CD4-positive, alpha-beta memory T cell (primary cell): ENCODE measurements at regions of chr12 and their contacts with region 1.

Region 1: GRCh38 chr12:101280006-101280505 is at the start of gene UTP20:
- DNase-seq: peak; percentile 91 to 93 (median 92)
- H3K4me3 ChIP-seq: peak within 1 kb of the TSS; percentile 71 to 93
- H3K4me3 Mint-ChIP-seq: peak within 1 kb of the TSS; percentile 95 to 98 (median 95)
- H3K27ac ChIP-seq: peak within 1 kb of the TSS; percentile 56
- H3K27ac Mint-ChIP-seq: peak within 1 kb of the TSS; percentile 78 to 93 (median 88)
- H3K4me1 ChIP-seq: peaks cover 7% of the 10 kb centered on the region
- H3K4me1 Mint-ChIP-seq: peaks cover 7 to 27% (median 14%) of the 10 kb centered on the region in 4 donors
- H3K27me3 ChIP-seq: peaks cover 6% of the 10 kb centered on the region
- H3K27me3 Mint-ChIP-seq: peaks cover 3 to 9% of the 10 kb centered on the region in 2 donors
- total RNA-seq, gene UTP20: 14.6 to 14.9 TPM

Region 2: DNA sequence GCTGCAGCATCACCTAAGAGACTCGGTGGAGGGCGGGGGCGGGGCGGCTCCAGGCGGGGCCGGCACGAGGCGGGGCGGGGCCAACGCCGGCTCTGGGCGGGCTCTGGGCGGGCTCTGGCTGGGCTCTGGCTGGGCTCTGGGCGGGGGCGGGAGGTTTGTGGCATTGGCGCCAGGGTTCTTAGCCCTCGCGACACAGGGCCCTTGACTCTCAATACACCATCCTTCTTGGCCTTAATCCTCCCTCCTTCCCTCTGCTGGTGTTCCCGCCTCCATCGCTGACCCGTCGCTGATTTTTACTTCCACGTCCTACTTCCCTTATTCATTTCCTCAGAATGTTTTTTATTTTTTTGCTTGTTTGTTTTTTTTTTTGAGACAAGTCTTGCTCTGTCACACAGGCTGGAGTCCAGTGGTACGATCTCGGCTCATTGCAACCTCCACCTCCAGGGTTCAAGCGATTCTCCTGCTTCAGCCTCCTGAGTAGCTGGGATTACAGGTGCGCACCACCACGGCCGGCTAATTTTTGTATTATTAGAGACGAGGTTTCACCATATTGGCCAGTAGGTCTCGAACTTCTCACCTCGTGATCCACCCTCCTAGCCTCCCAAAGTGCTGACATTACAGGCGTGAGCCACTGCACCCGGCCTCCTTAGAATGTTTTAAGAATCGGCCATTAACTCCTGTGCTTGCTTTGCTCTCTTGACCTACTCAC is 1137.1 kb before region 1 on chr12 and contains the start of gene BLTP3B:
- CTCF ChIA-PET with region 1: no interaction called
- POLR2A ChIA-PET with region 1: no interaction called
- intact Hi-C with region 1: loop called (anchors 5 kb)
- DNase-seq: peak; percentile 81 to 88 (median 85)
- H3K4me3 ChIP-seq: peak within 1 kb of the TSS; percentile 66 to 85
- H3K4me3 Mint-ChIP-seq: peak within 1 kb of the TSS; percentile 89 to 98 (median 96)
- H3K27ac ChIP-seq: peak within 1 kb of the TSS; percentile 85
- H3K27ac Mint-ChIP-seq: peak within 1 kb of the TSS; percentile 90 to 97 (median 97)
- H3K4me1 ChIP-seq: peaks cover 22% of the 10 kb centered on the region
- H3K4me1 Mint-ChIP-seq: peaks cover 28 to 42% (median 34%) of the 10 kb centered on the region in 4 donors
- H3K27me3 ChIP-seq: no peaks in the 10 kb centered on the region
- H3K27me3 Mint-ChIP-seq: no peaks in the 10 kb centered on the region
- total RNA-seq, gene BLTP3B: 16.2 to 16.8 TPM

Region 3: GRCh38 chr12:100234598-100235304 is 1045.3 kb before region 1 on chr12:
- CTCF ChIA-PET with region 1: no interaction called
- POLR2A ChIA-PET with region 1: no interaction called
- intact Hi-C with region 1: no loop called
- DNase-seq: peak in 4 of 5 donors; percentile 14 to 25 (median 20)
- H3K4me3 ChIP-seq: no peak overlapping the region
- H3K4me3 Mint-ChIP-seq: no peak overlapping the region
- H3K27ac ChIP-seq: no peak overlapping the region
- H3K27ac Mint-ChIP-seq: no peak overlapping the region
- H3K4me1 ChIP-seq: no peaks in the 10 kb centered on the region
- H3K4me1 Mint-ChIP-seq: no peaks in the 10 kb centered on the region
- H3K27me3 ChIP-seq: no peaks in the 10 kb centered on the region
- H3K27me3 Mint-ChIP-seq: no peaks in the 10 kb centered on the region

Region 4: GRCh38 chr12:101038289-101038871 is 241.7 kb before region 1 on chr12:
- CTCF ChIA-PET with region 1: no interaction called
- POLR2A ChIA-PET with region 1: no interaction called
- intact Hi-C with region 1: no loop called
- DNase-seq: no peak
- H3K4me3 ChIP-seq: no peak overlapping the region
- H3K4me3 Mint-ChIP-seq: no peak overlapping the region
- H3K27ac ChIP-seq: no peak overlapping the region
- H3K27ac Mint-ChIP-seq: peak overlapping the region in 1 of 7 donors; percentile 44
- H3K4me1 ChIP-seq: no peaks in the 10 kb centered on the region
- H3K4me1 Mint-ChIP-seq: no peaks in the 10 kb centered on the region
- H3K27me3 ChIP-seq: no peaks in the 10 kb centered on the region
- H3K27me3 Mint-ChIP-seq: no peaks in the 10 kb centered on the region